Activated naive CD8-positive, alpha-beta T cell treated with anti-CD3 and anti-CD28 coated beads, Interleukin-2, amount 10 ng/mL, durations not matched to agents 7 days and 5 days (primary cell): ENCODE measurements at regions of chr10 and their contacts with region 1.

Region 1: DNA sequence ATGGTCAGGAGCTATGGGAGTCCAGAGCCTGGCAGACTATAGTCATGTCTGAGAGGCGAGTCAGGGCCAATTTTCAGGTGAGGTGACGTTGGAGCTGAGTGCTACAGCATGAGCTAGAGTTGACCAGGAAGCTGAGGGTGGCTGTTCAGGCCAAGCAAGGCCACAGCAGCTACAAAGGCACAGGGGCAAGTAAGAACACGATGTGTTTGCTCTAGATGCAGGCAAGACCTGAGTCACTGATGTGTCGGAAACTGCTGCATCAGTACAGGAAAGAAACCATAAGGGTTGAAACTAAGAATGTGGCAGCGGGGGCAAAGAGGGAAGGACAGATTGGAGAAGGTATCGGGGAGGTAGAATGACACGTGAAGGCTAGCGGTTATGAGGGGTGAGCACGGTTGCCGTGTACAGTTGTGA is 11.8 kb upstream of the RRP12 start:
- DNase-seq: no peak
- ATAC-seq: no peak
- H3K4me3 Mint-ChIP-seq: peak overlapping the region; percentile 51
- H3K27ac Mint-ChIP-seq: peak overlapping the region; percentile 74
- H3K4me1 Mint-ChIP-seq: peaks cover 43% of the 10 kb centered on the region
- H3K27me3 Mint-ChIP-seq: no peaks in the 10 kb centered on the region

Region 2: DNA sequence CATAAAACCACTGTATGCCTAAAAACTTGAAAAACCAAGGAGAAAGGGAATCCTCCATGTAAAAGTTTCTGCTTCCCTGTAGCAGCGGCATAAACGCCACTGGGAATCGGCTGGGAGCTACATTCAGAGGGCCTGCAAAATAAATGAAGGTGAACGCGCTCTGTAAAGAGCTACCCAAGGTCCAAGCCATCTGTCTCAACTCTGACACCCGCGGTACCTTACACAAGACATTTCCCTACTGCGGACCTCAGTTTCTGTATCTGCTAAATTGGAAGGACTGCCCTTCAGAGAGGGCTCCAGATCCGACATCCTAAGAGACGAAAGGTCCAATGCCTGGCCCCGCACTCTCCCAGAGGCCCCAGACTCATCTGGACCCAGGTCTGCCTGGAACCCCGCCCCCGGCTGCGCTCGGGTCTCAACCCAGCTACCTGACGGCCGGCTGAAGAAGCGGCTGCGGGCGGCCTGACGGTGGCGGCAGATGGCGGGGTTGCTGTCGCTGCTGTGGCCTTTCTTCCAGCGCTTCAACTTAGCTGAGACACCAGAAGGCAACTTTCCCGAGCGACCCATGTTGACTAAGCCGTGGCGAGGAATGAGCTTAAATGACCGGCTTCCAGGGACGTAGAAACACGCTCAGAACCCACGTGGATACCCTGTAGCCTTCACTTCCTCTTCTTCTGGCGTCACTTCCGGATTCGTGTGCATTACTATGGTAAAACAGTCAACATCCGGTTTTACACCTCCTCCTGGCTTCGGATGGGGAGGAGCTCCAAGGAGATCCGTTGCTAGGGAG is 12.0 kb before region 1 on chr10 and contains the start of gene RRP12:
- POLR2A ChIA-PET with region 1: interaction called, 25 read pairs
- DNase-seq: peak; percentile 74
- ATAC-seq: peak; percentile 92
- H3K4me3 Mint-ChIP-seq: peak within 1 kb of the TSS; percentile 90
- H3K27ac Mint-ChIP-seq: peak within 1 kb of the TSS; percentile 85
- H3K4me1 Mint-ChIP-seq: peaks cover 5% of the 10 kb centered on the region
- H3K27me3 Mint-ChIP-seq: no peaks in the 10 kb centered on the region
- total RNA-seq, gene RRP12: 20.5 to 23.8 TPM

Region 3: GRCh38 chr10:97425964-97426775 is 13.3 kb after region 1 on chr10 and contains the start of gene PGAM1:
- POLR2A ChIA-PET with region 1: interaction called, 26 read pairs
- DNase-seq: peak; percentile 98
- ATAC-seq: peak; percentile 89
- H3K4me3 Mint-ChIP-seq: peak within 1 kb of the TSS; percentile 92
- H3K27ac Mint-ChIP-seq: peak within 1 kb of the TSS; percentile 96
- H3K4me1 Mint-ChIP-seq: peaks cover 28% of the 10 kb centered on the region
- H3K27me3 Mint-ChIP-seq: no peaks in the 10 kb centered on the region
- total RNA-seq, gene PGAM1: 288 to 298 TPM